Activated naive CD4-positive, alpha-beta T cell treated with anti-CD3 and anti-CD28 coated beads, Interleukin-2, amount 10 ng/mL, durations not matched to agents 7 days and 5 days (primary cell): ENCODE measurements at regions of chr15 and their contacts with region 1.

Region 1: GRCh38 chr15:52078876-52079700 is 33.5 kb downstream of the BCL2L10 start:
- DNase-seq: peak; percentile 89
- H3K4me3 Mint-ChIP-seq: no peak overlapping the region
- H3K27ac Mint-ChIP-seq: peak overlapping the region; percentile 3
- H3K4me1 Mint-ChIP-seq: peaks cover 21% of the 10 kb centered on the region
- H3K27me3 Mint-ChIP-seq: no peaks in the 10 kb centered on the region

Region 2: DNA sequence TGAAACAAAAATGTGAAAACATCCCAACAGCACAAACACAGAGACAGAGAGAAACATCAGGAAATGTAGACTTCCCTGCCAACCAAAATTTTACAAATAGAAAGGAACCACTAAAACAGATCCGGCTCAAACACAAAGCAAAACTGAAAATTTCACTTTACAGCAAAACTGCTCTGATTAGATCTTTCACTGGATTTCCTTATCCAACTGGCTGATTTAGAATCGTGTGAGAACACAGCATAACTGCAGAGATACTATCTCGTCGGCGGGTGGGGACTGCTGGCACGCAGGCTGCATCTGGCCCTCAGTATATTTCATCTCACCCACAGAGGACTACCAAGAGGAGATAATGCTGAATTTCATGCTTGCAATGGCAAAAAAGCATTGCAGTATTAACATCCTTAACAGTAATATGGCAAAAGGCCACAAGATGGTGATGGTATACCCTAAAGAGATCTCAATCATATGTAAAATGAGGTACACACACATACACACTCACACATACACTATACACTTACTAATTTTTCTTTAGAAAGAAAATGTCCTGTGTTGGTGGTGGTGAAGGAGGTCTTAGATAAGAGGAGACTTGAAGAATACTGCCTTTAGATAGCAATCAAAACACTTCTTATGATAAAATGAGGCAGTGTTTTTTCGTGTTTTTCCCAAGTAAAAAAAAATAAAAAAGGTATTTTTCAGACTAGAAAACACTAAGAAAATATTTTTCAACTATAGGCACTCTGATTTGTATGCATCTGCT is 96.9 kb before region 1 on chr15:
- CTCF ChIA-PET with region 1: interaction called, 39 read pairs
- DNase-seq: peak; percentile 80
- H3K4me3 Mint-ChIP-seq: peak overlapping the region; percentile 70
- H3K27ac Mint-ChIP-seq: peak overlapping the region; percentile 93
- H3K4me1 Mint-ChIP-seq: peaks cover 17% of the 10 kb centered on the region
- H3K27me3 Mint-ChIP-seq: peaks cover 6% of the 10 kb centered on the region

Region 3: DNA sequence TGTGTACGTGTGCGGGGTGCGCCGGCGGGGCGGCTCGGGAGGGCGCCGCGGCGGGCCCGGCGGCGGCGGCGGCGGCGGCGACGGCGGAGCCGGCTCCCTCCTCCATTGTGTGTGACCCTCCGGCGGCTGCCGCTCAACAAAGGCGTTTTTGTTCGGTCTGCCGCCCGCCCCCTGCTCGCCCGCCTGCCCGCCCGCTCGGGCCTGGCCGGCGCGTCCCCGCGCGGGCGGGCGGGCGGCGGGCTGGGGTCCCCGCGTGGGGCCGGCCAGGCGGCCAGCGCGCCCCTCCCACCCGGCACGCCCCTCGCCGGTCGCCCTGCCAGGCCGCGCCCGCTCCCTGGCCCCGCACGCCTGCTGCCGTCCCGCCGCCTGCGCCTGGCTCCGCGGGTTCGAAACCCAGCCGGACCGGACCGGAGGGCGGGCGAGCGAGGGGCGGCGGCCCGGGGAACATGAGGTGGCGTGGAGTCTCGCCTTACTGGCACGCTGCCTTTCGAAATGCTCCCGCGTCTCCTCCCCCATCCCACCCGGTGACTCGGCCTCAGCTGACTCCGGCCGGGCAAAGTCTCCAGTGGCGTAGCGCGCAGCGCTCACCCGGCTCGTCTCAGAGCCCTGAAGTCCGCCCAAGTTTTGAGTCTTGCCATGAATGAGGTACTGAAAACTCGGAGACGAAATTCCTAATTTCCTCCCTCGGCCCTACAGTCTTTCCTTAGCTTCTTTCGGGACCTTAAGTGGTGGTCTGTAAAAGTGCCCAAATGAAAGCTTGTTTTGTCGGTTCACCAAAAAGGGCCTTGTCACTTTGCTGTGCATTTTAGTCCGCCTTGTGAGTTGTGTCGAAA is 59.5 kb before region 1 on chr15:
- CTCF ChIA-PET with region 1: interaction called, 10 read pairs
- DNase-seq: peak; percentile 75
- H3K4me3 Mint-ChIP-seq: peak overlapping the region; percentile 98
- H3K27ac Mint-ChIP-seq: peak overlapping the region; percentile 99
- H3K4me1 Mint-ChIP-seq: peaks cover 36% of the 10 kb centered on the region
- H3K27me3 Mint-ChIP-seq: peaks cover 14% of the 10 kb centered on the region

Region 4: GRCh38 chr15:52028431-52029093 is 50.5 kb before region 1 on chr15:
- CTCF ChIA-PET with region 1: interaction called, 11 read pairs
- DNase-seq: no peak
- H3K4me3 Mint-ChIP-seq: no peak overlapping the region
- H3K27ac Mint-ChIP-seq: no peak overlapping the region
- H3K4me1 Mint-ChIP-seq: peaks cover 5% of the 10 kb centered on the region
- H3K27me3 Mint-ChIP-seq: no peaks in the 10 kb centered on the region

Region 5: DNA sequence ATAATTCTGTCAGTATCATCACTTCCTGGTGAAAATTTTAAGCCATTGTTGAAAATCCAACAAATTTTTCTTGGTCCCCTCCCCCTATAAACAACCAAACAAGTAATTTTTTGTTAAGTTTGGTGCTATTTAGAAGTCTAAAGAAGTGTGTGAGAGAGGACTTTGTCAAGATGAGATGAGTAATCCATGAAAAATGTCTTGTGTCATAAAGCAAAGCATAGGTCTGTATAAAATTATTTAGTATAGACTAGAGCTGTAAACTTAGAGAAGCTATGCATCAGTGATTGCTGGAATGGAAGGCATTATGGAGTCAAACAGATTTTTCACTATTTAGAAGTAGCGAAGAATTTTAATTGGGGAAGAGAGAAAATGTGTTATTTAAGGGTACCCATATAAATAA is 28.7 kb before region 1 on chr15:
- CTCF ChIA-PET with region 1: interaction called, 10 read pairs
- DNase-seq: no peak
- H3K4me3 Mint-ChIP-seq: no peak overlapping the region
- H3K27ac Mint-ChIP-seq: no peak overlapping the region
- H3K4me1 Mint-ChIP-seq: peaks cover 21% of the 10 kb centered on the region
- H3K27me3 Mint-ChIP-seq: no peaks in the 10 kb centered on the region

Region 6: GRCh38 chr15:52163321-52164190 is 84.5 kb after region 1 on chr15:
- CTCF ChIA-PET with region 1: no interaction called
- DNase-seq: peak; percentile 33
- H3K4me3 Mint-ChIP-seq: no peak overlapping the region
- H3K27ac Mint-ChIP-seq: no peak overlapping the region
- H3K4me1 Mint-ChIP-seq: peaks cover 10% of the 10 kb centered on the region
- H3K27me3 Mint-ChIP-seq: no peaks in the 10 kb centered on the region